ENCODE measurements at regions of chr6 and their contacts with region 1.

Region 1: GRCh38 chr6:2952557-2953095 is 18.7 kb downstream of the SERPINB6 start:
- DNase-seq: peak; percentile 91
- ATAC-seq: peak; percentile 92
- H3K4me3 Mint-ChIP-seq: peak overlapping the region; percentile 22; the same call in 1 of the 2 replicates
- H3K27ac Mint-ChIP-seq: peak overlapping the region; percentile 33; the same call in 1 of the 2 replicates
- H3K4me1 Mint-ChIP-seq: peaks cover 24% of the 10 kb centered on the region
- H3K27me3 Mint-ChIP-seq: no peaks in the 10 kb centered on the region
- CTCF ChIP-seq: peak; percentile 96

Region 2: DNA sequence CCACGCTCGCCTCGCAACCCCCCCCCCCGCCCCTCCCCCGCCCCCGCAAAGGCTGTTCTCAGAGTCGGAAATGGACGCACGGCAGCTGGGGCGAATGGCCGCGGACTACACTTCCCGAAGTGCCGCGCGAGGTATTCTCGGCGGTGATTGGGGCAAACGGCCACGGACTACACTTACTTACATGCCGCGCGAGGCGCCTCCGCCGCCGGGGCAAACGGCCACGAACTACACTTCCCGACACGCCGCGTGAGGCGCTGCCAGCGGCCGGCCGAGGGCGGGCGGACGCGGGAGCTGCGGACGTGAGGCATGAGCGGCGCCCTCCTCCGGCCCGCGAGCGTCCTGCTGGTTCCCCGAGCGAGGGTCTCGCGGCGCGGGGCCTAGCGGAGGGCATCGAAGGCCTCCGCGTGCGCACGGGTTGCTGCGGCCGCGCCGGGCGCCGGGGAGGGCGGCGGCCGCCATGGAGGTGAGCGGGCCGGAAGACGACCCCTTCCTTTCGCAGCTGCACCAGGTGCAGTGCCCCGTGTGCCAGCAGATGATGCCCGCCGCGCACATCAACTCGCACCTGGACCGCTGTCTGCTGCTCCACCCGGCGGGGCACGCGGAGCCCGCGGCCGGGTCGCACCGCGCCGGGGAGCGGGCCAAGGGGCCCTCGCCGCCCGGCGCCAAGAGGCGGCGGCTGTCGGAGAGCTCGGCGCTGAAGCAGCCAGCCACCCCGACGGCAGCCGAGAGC is 187.3 kb before region 1 on chr6 and contains the start of gene WRNIP1:
- CTCF ChIA-PET with region 1: interaction called, 13 read pairs
- POLR2A ChIA-PET with region 1: no interaction called
- DNase-seq: peak; percentile 96
- ATAC-seq: peak; percentile 92
- H3K4me3 Mint-ChIP-seq: peak within 1 kb of the TSS; percentile 89
- H3K27ac Mint-ChIP-seq: peak within 1 kb of the TSS; percentile 95
- H3K4me1 Mint-ChIP-seq: peaks cover 38% of the 10 kb centered on the region
- H3K27me3 Mint-ChIP-seq: no peaks in the 10 kb centered on the region
- CTCF ChIP-seq: no peak
- total RNA-seq, gene WRNIP1: 33.8 to 36.3 TPM (median 36.2 TPM) in 3 replicates

Region 3: GRCh38 chr6:2841264-2842138 is 111.1 kb before region 1 on chr6 and contains the start of gene SERPINB1:
- CTCF ChIA-PET with region 1: interaction called, 52 read pairs
- POLR2A ChIA-PET with region 1: no interaction called
- DNase-seq: peak; percentile 87
- ATAC-seq: peak; percentile 92
- H3K4me3 Mint-ChIP-seq: peak within 1 kb of the TSS; percentile 91
- H3K27ac Mint-ChIP-seq: peak within 1 kb of the TSS; percentile 100
- H3K4me1 Mint-ChIP-seq: peaks cover 37% of the 10 kb centered on the region
- H3K27me3 Mint-ChIP-seq: no peaks in the 10 kb centered on the region; the same call in 1 of the 2 replicates
- CTCF ChIP-seq: no peak
- total RNA-seq, gene SERPINB1: 14.8 to 21.1 TPM (median 16.9 TPM) in 3 replicates

Region 4: GRCh38 chr6:2876210-2877056 is 76.2 kb before region 1 on chr6:
- CTCF ChIA-PET with region 1: interaction called, 15 read pairs
- POLR2A ChIA-PET with region 1: interaction called, 3 read pairs
- DNase-seq: peak; percentile 37
- ATAC-seq: peak; percentile 42
- H3K4me3 Mint-ChIP-seq: peak overlapping the region; percentile 91
- H3K27ac Mint-ChIP-seq: peak overlapping the region; percentile 93
- H3K4me1 Mint-ChIP-seq: peaks cover 52% of the 10 kb centered on the region
- H3K27me3 Mint-ChIP-seq: peaks cover 22% of the 10 kb centered on the region
- CTCF ChIP-seq: no peak

Region 5: GRCh38 chr6:2931970-2932748 is 20.5 kb before region 1 on chr6:
- CTCF ChIA-PET with region 1: interaction called, 114 read pairs
- POLR2A ChIA-PET with region 1: no interaction called
- DNase-seq: peak; percentile 95
- ATAC-seq: peak; percentile 93
- H3K4me3 Mint-ChIP-seq: no peak overlapping the region
- H3K27ac Mint-ChIP-seq: peak overlapping the region; percentile 92; the same call in 1 of the 2 replicates
- H3K4me1 Mint-ChIP-seq: peaks cover 50% of the 10 kb centered on the region
- H3K27me3 Mint-ChIP-seq: no peaks in the 10 kb centered on the region
- CTCF ChIP-seq: peak; percentile 88

Region 6: DNA sequence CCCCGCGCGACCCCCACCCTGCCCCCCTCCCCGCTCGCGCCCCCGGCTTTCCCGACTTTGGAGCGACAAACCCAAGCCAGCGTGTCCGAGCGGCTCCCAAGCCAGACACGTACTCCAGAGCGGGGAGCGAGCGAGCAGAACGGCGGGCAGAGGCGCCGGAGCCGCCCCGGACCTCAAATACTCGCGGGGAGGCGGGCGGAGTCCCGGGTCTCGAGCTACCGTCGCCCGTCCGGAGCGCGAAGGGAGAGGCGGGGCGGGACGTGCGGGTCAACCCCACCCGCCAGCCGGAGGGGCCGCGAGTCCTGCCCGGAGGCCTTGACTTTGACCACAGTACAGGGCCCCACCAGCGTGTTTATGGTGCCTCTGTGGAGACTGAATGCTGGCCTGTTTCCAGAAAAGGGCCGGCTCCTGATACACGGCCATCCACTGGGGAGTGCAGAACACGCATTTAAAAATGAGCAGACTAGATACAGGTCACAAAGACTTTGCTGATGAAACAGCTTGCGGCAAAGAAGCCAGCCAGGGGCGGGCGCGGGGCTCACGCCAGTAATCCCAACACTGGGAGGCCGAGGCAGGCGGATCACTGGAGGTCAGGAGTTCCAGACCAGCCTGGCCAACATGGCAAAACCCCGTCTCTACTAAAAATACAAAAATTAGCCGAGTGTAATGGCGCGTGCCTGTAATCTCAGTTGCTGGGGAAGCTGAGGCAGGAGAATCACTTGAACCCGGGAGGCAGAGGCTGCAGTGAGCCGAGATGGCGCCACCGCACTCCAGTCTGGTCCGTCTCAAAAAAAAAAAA is 19.0 kb after region 1 on chr6 and contains the start of gene SERPINB6:
- CTCF ChIA-PET with region 1: interaction called, 24 read pairs
- POLR2A ChIA-PET with region 1: interaction called, 4 read pairs
- DNase-seq: peak; percentile 52
- ATAC-seq: peak; percentile 66
- H3K4me3 Mint-ChIP-seq: peak within 1 kb of the TSS; percentile 78
- H3K27ac Mint-ChIP-seq: no peak within 1 kb of the TSS
- H3K4me1 Mint-ChIP-seq: peaks cover 19% of the 10 kb centered on the region
- H3K27me3 Mint-ChIP-seq: peaks cover 15% of the 10 kb centered on the region
- CTCF ChIP-seq: no peak
- total RNA-seq, gene SERPINB6: 28.0 to 33.7 TPM (median 32.9 TPM) in 3 replicates

Region 7: GRCh38 chr6:2999618-3000557 is 47.3 kb after region 1 on chr6 and contains the start of gene NQO2:
- CTCF ChIA-PET with region 1: interaction called, 20 read pairs
- POLR2A ChIA-PET with region 1: no interaction called
- DNase-seq: peak; percentile 97
- ATAC-seq: peak; percentile 88
- H3K4me3 Mint-ChIP-seq: peak within 1 kb of the TSS; percentile 90
- H3K27ac Mint-ChIP-seq: peak within 1 kb of the TSS; percentile 77
- H3K4me1 Mint-ChIP-seq: peaks cover 29% of the 10 kb centered on the region
- H3K27me3 Mint-ChIP-seq: no peaks in the 10 kb centered on the region; the same call in 1 of the 2 replicates
- CTCF ChIP-seq: no peak
- total RNA-seq, gene NQO2: 119 to 152 TPM (median 150 TPM) in 3 replicates

Measured in WTC11 (cell line).